ENCODE measurements at regions of chr11 and their contacts with region 1.

Region 1: DNA sequence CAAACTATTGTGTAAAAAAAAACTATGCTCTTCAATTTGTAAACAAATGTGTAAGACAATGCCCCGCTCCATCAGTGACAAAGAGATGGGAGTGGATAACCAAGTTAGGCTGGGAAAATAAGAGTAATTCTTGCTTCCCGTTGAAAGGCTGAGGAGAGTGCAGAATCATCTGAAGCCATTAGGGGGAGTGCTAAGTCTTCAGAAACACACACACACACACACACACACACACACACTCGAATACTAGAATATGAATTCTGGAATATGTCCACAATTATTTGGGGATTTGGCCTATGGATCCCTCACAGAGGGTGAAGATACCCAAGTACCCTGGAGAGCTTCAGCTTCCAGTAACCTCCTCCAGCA is 27.8 kb upstream of the ROBO3 start:
- DNase-seq: no peak
- ATAC-seq: peak; percentile 50
- H3K4me3 Mint-ChIP-seq: no peak overlapping the region
- H3K27ac Mint-ChIP-seq: no peak overlapping the region
- H3K4me1 Mint-ChIP-seq: peaks cover 15% of the 10 kb centered on the region
- H3K27me3 Mint-ChIP-seq: peaks cover 57% of the 10 kb centered on the region

Region 2: GRCh38 chr11:124644426-124645280 is 192.8 kb before region 1 on chr11:
- CTCF ChIA-PET with region 1: interaction called, 6 read pairs
- POLR2A ChIA-PET with region 1: no interaction called
- intact Hi-C with region 1: loop called (anchors 1 to 2 kb)
- DNase-seq: peak; percentile 38
- ATAC-seq: no peak
- H3K4me3 Mint-ChIP-seq: no peak overlapping the region
- H3K27ac Mint-ChIP-seq: no peak overlapping the region
- H3K4me1 Mint-ChIP-seq: peaks cover 3% of the 10 kb centered on the region
- H3K27me3 Mint-ChIP-seq: no peaks in the 10 kb centered on the region

Region 3: GRCh38 chr11:124746621-124747243 is 90.7 kb before region 1 on chr11:
- CTCF ChIA-PET with region 1: interaction called, 12 read pairs
- POLR2A ChIA-PET with region 1: no interaction called
- intact Hi-C with region 1: loop called (anchors 1 kb)
- DNase-seq: peak; percentile 88
- ATAC-seq: peak; percentile 92
- H3K4me3 Mint-ChIP-seq: peak overlapping the region; percentile 81
- H3K27ac Mint-ChIP-seq: peak overlapping the region; percentile 90
- H3K4me1 Mint-ChIP-seq: peaks cover 11% of the 10 kb centered on the region
- H3K27me3 Mint-ChIP-seq: peaks cover 2% of the 10 kb centered on the region

Region 4: GRCh38 chr11:124865921-124866583 is 28.6 kb after region 1 on chr11:
- CTCF ChIA-PET with region 1: interaction called, 14 read pairs
- POLR2A ChIA-PET with region 1: no interaction called
- intact Hi-C with region 1: loop called (anchors 1 to 2 kb)
- DNase-seq: peak; percentile 77
- ATAC-seq: peak; percentile 60
- H3K4me3 Mint-ChIP-seq: no peak overlapping the region
- H3K27ac Mint-ChIP-seq: no peak overlapping the region
- H3K4me1 Mint-ChIP-seq: peaks cover 31% of the 10 kb centered on the region
- H3K27me3 Mint-ChIP-seq: peaks cover 81% of the 10 kb centered on the region

Region 5: GRCh38 chr11:124953753-124954589 is 116.5 kb after region 1 on chr11 and contains the start of gene CCDC15:
- CTCF ChIA-PET with region 1: interaction called, 3 read pairs
- POLR2A ChIA-PET with region 1: no interaction called
- intact Hi-C with region 1: loop called in 1 of 2 experiments (anchors 2 kb)
- DNase-seq: peak; percentile 97
- ATAC-seq: peak; percentile 98
- H3K4me3 Mint-ChIP-seq: no peak within 1 kb of the TSS
- H3K27ac Mint-ChIP-seq: no peak within 1 kb of the TSS
- H3K4me1 Mint-ChIP-seq: peaks cover 4% of the 10 kb centered on the region
- H3K27me3 Mint-ChIP-seq: no peaks in the 10 kb centered on the region
- total RNA-seq, gene CCDC15: 5.6 to 6.7 TPM

Region 6: DNA sequence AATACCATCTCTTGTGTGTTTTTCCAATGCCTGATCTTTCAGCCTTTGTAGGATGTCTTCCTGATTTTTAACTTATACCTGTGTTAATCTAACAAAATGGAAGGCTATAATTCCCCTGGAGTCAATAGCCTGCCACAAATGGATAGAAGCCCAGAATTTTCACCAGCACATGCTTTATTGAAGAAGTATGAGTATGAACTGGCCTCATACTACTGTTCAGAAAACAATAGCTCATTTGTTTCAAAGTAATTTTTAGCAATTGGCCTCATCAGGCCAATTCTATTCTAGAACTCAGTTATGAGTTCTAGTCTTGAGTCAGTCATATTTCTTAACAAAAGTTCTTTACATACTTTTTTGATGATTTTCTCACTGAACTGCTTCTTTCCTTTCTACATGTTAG is 185.1 kb after region 1 on chr11:
- CTCF ChIA-PET with region 1: no interaction called
- POLR2A ChIA-PET with region 1: no interaction called
- intact Hi-C with region 1: no loop called
- DNase-seq: no peak
- ATAC-seq: no peak
- H3K4me3 Mint-ChIP-seq: no peak overlapping the region
- H3K27ac Mint-ChIP-seq: no peak overlapping the region
- H3K4me1 Mint-ChIP-seq: no peaks in the 10 kb centered on the region
- H3K27me3 Mint-ChIP-seq: no peaks in the 10 kb centered on the region

Measured in activated CD4-positive, alpha-beta T cell treated with anti-CD3 and anti-CD28 coated beads for 36 hours (primary cell).